H1 (cell line): ENCODE measurements at regions of chr2 and their contacts with region 1.

Region 1: GRCh38 chr2:161586517-161587167 is 37.6 kb upstream of the SLC4A10 start:
- DNase-seq: no peak
- H3K4me3 ChIP-seq: no peak overlapping the region
- H3K27ac ChIP-seq: no peak overlapping the region
- H3K4me1 ChIP-seq: no peaks in the 10 kb centered on the region
- H3K27me3 ChIP-seq: no peaks in the 10 kb centered on the region
- CTCF ChIP-seq: peak in 2 of 3 experiments; percentile 47 to 68; a peak in 2 of 4 replicates
- EP300 ChIP-seq: no peak
- POLR2A ChIP-seq: no peak
- RAD21 ChIP-seq: peak; percentile 85 to 88

Region 2: DNA sequence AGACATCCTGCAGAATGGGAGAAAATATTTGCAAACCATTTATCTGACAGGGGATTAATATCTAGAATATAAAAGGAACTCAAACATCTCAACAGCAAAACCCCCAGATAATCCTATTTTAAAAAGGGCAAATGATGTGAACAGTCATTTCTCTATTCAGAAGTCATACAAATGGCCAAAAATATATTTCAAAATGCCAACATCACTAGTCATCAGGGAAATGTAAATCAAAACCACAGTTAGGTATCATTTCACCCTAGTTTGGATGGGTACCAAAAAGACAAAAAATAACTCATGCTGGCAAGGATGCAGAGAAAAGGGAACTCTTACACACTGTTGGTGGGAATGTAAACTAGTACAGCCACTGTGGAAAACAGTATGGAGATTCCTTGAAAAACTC is 100.5 kb before region 1 on chr2:
- CTCF ChIA-PET with region 1: no interaction called
- POLR2A ChIA-PET with region 1: no interaction called
- DNase-seq: no peak
- H3K4me3 ChIP-seq: no peak overlapping the region
- H3K27ac ChIP-seq: no peak overlapping the region
- H3K4me1 ChIP-seq: no peaks in the 10 kb centered on the region
- H3K27me3 ChIP-seq: no peaks in the 10 kb centered on the region
- CTCF ChIP-seq: no peak
- EP300 ChIP-seq: no peak
- POLR2A ChIP-seq: no peak
- RAD21 ChIP-seq: no peak

Region 3: GRCh38 chr2:161556440-161556839 is 30.2 kb before region 1 on chr2:
- CTCF ChIA-PET with region 1: no interaction called
- POLR2A ChIA-PET with region 1: no interaction called
- DNase-seq: no peak
- H3K4me3 ChIP-seq: no peak overlapping the region
- H3K27ac ChIP-seq: no peak overlapping the region
- H3K4me1 ChIP-seq: no peaks in the 10 kb centered on the region
- H3K27me3 ChIP-seq: no peaks in the 10 kb centered on the region
- CTCF ChIP-seq: no peak
- EP300 ChIP-seq: no peak
- POLR2A ChIP-seq: no peak
- RAD21 ChIP-seq: peak in 1 of 2 experiments; percentile 24

Region 4: GRCh38 chr2:161570424-161571050 is 16.1 kb before region 1 on chr2:
- CTCF ChIA-PET with region 1: interaction called, 31 read pairs
- POLR2A ChIA-PET with region 1: interaction called, 3 read pairs
- DNase-seq: no peak
- H3K4me3 ChIP-seq: no peak overlapping the region
- H3K27ac ChIP-seq: no peak overlapping the region
- H3K4me1 ChIP-seq: no peaks in the 10 kb centered on the region
- H3K27me3 ChIP-seq: no peaks in the 10 kb centered on the region
- CTCF ChIP-seq: peak; percentile 30 to 52 (median 47); a peak in 3 of 4 replicates
- EP300 ChIP-seq: no peak
- POLR2A ChIP-seq: no peak
- RAD21 ChIP-seq: peak; percentile 31 to 44; a peak in 3 of 4 replicates

Region 5: GRCh38 chr2:161599842-161600241 is 13.2 kb after region 1 on chr2:
- CTCF ChIA-PET with region 1: interaction called, 13 read pairs
- POLR2A ChIA-PET with region 1: no interaction called
- DNase-seq: no peak
- H3K4me3 ChIP-seq: no peak overlapping the region
- H3K27ac ChIP-seq: no peak overlapping the region
- H3K4me1 ChIP-seq: no peaks in the 10 kb centered on the region
- H3K27me3 ChIP-seq: no peaks in the 10 kb centered on the region
- CTCF ChIP-seq: no peak
- EP300 ChIP-seq: no peak
- POLR2A ChIP-seq: no peak
- RAD21 ChIP-seq: no peak